ENCODE measurements at regions of chr17 and their contacts with region 1.

Region 1: GRCh38 chr17:64145757-64146417 is 15.9 kb upstream of the ERN1 start:
- DNase-seq: peak; percentile 100
- ATAC-seq: peak; percentile 78
- H3K4me3 ChIP-seq: peak overlapping the region; percentile 75 to 86 (median 84)
- H3K27ac ChIP-seq: peak overlapping the region; percentile 88
- H3K4me1 ChIP-seq: peaks cover 55% of the 10 kb centered on the region
- H3K27me3 ChIP-seq: no peaks in the 10 kb centered on the region; a peak in 1 of 5 replicates
- CTCF ChIP-seq: no peak; the same call in none of the 2 replicates
- EP300 ChIP-seq: peak in 1 of 2 experiments; percentile 25; a peak in 1 of 4 replicates
- POLR2A ChIP-seq: peak; percentile 100
- RAD21 ChIP-seq: peak; percentile 74

Region 2: GRCh38 chr17:63773381-63774140 is 372.3 kb before region 1 on chr17 and contains the start of gene CCDC47:
- CTCF ChIA-PET with region 1: no interaction called
- POLR2A ChIA-PET with region 1: interaction called, 10 read pairs
- in situ Hi-C with region 1: no loop called
- intact Hi-C with region 1: no loop called
- DNase-seq: peak; percentile 100
- ATAC-seq: peak; percentile 91
- H3K4me3 ChIP-seq: peak within 1 kb of the TSS; percentile 93 to 99 (median 94)
- H3K27ac ChIP-seq: peak within 1 kb of the TSS; percentile 100
- H3K4me1 ChIP-seq: peaks cover 45% of the 10 kb centered on the region
- H3K27me3 ChIP-seq: peaks cover 0 to 6% of the 10 kb centered on the region in 2 experiments; a peak in 1 of 5 replicates
- CTCF ChIP-seq: peak; percentile 4; the same call in 1 of the 2 replicates
- EP300 ChIP-seq: peak; percentile 47 to 68
- POLR2A ChIP-seq: peak; percentile 88 to 96
- RAD21 ChIP-seq: no peak; the same call in none of the 2 replicates
- total RNA-seq, gene CCDC47: 61.6 and 99.5 TPM in 2 replicates

Region 3: GRCh38 chr17:63984651-63985386 is 161.1 kb before region 1 on chr17:
- CTCF ChIA-PET with region 1: no interaction called
- POLR2A ChIA-PET with region 1: no interaction called
- in situ Hi-C with region 1: no loop called
- intact Hi-C with region 1: no loop called
- DNase-seq: peak; percentile 38
- ATAC-seq: no peak
- H3K4me3 ChIP-seq: no peak overlapping the region
- H3K27ac ChIP-seq: no peak overlapping the region
- H3K4me1 ChIP-seq: peaks cover 43% of the 10 kb centered on the region
- H3K27me3 ChIP-seq: peaks cover 13 to 46% of the 10 kb centered on the region in 2 experiments; a peak in 4 of 5 replicates
- CTCF ChIP-seq: no peak
- EP300 ChIP-seq: no peak
- POLR2A ChIP-seq: no peak
- RAD21 ChIP-seq: no peak

Region 4: DNA sequence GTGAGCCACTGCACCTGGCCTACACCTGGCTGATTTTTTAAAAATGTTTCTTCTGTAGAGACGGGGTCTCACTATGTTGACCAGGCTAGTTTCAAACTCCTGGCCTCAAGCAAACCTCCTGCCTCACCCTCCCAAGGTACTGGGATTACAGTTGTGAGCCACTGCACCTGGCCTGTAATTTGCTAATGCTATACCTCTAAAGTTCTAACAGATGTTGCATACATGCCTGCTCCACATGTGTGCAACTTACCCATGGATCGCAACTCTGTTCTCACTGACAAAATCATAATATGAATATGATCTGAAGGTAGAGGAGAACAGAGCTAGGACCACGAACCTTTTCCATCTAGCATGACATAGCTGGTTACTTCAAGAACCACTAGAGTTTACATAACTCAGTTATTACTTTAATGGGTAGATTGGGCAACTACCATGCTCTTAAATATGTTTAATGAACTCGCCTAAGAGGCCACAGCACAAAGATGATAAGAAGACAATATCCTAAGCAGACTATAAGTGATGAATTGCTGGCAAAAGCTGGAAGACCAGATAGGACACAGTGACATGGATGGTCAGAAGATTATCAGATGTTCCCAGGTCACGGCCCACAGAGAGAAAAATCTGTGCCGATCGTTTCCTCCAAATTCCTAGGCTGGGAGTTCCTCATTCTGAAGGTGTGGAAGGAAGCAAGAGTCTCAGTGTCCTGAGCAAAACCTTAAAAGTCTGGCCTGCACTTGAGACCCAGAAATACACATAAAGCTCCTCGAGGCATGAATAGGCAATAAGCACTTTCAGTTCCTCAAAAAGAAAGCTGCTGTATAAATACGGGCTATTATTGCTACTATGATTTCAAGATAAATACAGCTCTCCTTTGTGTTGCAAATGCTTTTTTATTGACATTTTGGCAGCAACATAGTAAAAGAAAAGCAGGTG is 71.8 kb before region 1 on chr17:
- CTCF ChIA-PET with region 1: no interaction called
- POLR2A ChIA-PET with region 1: interaction called, 56 read pairs
- in situ Hi-C with region 1: no loop called
- intact Hi-C with region 1: no loop called
- DNase-seq: no peak
- ATAC-seq: peak; percentile 34; the same call in 2 of the 3 replicates
- H3K4me3 ChIP-seq: peak overlapping the region in 1 of 3 experiments; percentile 44; a peak in 1 of 6 replicates
- H3K27ac ChIP-seq: peak overlapping the region; percentile 58
- H3K4me1 ChIP-seq: peaks cover 40% of the 10 kb centered on the region
- H3K27me3 ChIP-seq: no peaks in the 10 kb centered on the region
- CTCF ChIP-seq: no peak
- EP300 ChIP-seq: no peak
- POLR2A ChIP-seq: no peak
- RAD21 ChIP-seq: no peak

Region 5: DNA sequence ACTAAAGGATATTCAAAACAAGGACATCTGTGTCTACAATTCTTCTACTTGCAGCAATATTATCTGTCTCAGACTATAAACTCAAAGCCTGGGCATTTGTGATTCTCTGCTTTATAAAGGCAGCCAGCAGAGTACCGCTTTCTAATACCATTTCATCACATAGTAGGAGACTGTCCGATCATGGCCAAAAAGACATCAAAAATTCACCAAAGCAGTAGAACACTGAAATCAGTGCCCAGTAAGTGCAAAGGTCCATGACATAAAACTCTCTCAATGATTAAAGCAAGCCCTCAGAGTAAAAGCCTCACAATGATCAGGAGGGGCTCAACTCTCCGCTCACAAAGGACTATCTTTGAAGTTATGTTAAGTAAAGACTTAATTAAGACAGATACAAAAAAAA is 39.0 kb before region 1 on chr17:
- CTCF ChIA-PET with region 1: no interaction called
- POLR2A ChIA-PET with region 1: no interaction called
- in situ Hi-C with region 1: no loop called
- intact Hi-C with region 1: no loop called
- DNase-seq: no peak
- ATAC-seq: no peak
- H3K4me3 ChIP-seq: no peak overlapping the region
- H3K27ac ChIP-seq: no peak overlapping the region
- H3K4me1 ChIP-seq: peaks cover 52% of the 10 kb centered on the region
- H3K27me3 ChIP-seq: no peaks in the 10 kb centered on the region
- CTCF ChIP-seq: no peak
- EP300 ChIP-seq: no peak
- POLR2A ChIP-seq: no peak
- RAD21 ChIP-seq: no peak

Region 6: DNA sequence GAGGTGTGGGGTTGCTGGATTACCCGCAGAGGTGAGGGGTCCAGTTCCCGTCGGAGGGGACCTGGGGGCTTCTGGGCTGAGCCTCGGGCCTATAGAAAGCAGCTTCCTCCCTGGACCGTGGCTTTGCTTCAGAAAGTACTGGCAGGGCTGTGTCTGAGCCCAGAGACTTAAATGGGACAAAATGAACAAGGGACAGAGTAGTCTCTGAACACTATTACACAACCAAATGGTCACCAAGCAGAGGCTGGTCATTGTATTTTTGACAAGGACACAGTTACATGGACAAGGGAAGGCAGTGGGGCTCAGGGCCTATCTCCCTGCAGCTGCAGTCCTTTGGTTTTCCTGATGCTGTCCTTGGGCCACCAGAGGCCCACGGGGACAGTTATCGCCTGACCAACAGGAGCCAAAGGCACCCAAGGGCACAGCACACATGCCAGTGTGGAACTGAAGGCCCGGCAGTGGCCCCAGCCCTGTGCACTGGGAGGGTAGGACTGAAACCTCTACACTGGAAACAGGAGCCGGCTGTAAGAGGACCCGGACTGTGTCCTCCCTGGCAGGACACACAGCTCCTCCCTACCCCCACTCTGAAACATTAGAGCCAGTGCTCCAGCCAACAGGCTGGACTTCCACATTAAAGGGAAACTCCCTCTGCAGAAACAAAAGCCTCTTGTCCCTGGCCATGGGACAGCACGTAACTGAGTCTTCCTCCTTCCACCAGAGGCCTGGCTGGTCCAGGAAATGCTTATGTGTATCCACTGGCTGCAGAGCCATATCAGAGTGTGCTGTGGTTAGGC is 10.1 kb after region 1 on chr17:
- CTCF ChIA-PET with region 1: no interaction called
- POLR2A ChIA-PET with region 1: interaction called, 103 read pairs
- in situ Hi-C with region 1: no loop called
- intact Hi-C with region 1: no loop called
- DNase-seq: peak; percentile 98
- ATAC-seq: peak; percentile 94
- H3K4me3 ChIP-seq: peak overlapping the region; percentile 4 to 64 (median 6); a peak in 4 of 6 replicates
- H3K27ac ChIP-seq: peak overlapping the region; percentile 88
- H3K4me1 ChIP-seq: peaks cover 79% of the 10 kb centered on the region
- H3K27me3 ChIP-seq: no peaks in the 10 kb centered on the region
- CTCF ChIP-seq: peak; percentile 45
- EP300 ChIP-seq: peak in 1 of 2 experiments; percentile 59; a peak in 2 of 4 replicates
- POLR2A ChIP-seq: peak; percentile 70 to 86
- RAD21 ChIP-seq: peak; percentile 67; the same call in 1 of the 2 replicates

Region 7: DNA sequence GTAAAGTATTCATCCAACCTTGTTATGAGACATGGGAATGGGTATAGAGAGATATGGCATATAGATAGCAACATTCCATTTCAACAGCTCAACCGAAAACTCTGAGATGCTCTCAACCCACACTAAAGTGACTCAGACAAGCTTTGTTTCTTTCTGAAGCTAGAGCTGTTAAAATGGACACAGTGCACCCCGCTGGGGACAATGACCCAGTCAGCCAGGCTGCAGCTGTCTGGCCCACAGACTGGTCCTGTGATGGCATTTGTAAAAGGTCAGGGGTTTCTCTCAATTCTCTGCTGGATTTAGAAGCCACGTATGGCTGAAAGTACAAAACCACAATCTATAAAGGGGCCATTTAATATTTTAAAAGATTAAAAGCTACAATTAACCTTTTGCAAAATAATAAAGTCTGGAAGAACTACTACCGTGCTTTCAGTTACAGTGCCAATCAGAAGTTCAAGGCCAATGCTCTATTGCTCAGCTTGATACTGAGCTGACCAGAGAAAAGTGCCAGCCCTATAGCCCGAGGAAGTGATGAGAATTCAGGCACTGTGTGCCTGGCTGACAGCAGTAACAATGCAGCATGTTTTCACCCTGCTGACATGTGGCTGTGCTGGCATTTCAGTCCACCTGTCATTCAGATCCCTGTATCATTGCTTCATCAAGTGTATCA is 56.9 kb after region 1 on chr17:
- CTCF ChIA-PET with region 1: no interaction called
- POLR2A ChIA-PET with region 1: interaction called, 33 read pairs
- in situ Hi-C with region 1: no loop called
- intact Hi-C with region 1: no loop called
- DNase-seq: peak; percentile 55
- ATAC-seq: peak; percentile 85
- H3K4me3 ChIP-seq: no peak overlapping the region
- H3K27ac ChIP-seq: no peak overlapping the region
- H3K4me1 ChIP-seq: peaks cover 48% of the 10 kb centered on the region
- H3K27me3 ChIP-seq: no peaks in the 10 kb centered on the region
- CTCF ChIP-seq: peak; percentile 63
- EP300 ChIP-seq: no peak; a peak in 1 of 4 replicates
- POLR2A ChIP-seq: no peak
- RAD21 ChIP-seq: no peak

Region 8: DNA sequence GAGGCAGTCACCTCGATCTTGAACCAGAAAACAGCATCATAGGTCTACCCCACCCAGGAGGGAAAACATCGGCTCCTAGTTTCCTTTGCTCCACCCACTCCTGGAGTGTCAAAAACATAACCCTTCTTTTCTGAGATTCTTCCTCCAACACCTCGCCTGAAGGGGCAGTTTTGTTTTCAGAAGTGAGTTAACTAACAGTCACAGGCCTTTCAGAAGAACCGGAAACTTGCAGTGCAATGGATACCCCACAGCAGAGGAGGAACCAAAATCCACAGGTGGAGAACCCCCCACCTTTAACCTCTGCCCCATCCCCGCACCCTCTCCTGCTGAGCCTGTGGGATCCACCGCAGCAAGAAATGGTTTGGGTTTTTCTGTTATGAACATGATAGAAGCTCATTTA is 125.0 kb after region 1 on chr17:
- CTCF ChIA-PET with region 1: no interaction called
- POLR2A ChIA-PET with region 1: interaction called, 80 read pairs
- in situ Hi-C with region 1: no loop called
- intact Hi-C with region 1: no loop called
- DNase-seq: no peak
- ATAC-seq: no peak
- H3K4me3 ChIP-seq: no peak overlapping the region
- H3K27ac ChIP-seq: no peak overlapping the region
- H3K4me1 ChIP-seq: peaks cover 22% of the 10 kb centered on the region
- H3K27me3 ChIP-seq: peaks cover 1 to 19% of the 10 kb centered on the region in 2 experiments; a peak in 3 of 5 replicates
- CTCF ChIP-seq: no peak
- EP300 ChIP-seq: no peak
- POLR2A ChIP-seq: no peak
- RAD21 ChIP-seq: no peak

Measured in HepG2 (cell line).